IMR-90 (cell line): ENCODE measurements at regions of chr5 and their contacts with region 1.

Region 1: GRCh38 chr5:170633235-170634081 is 129.6 kb downstream of the KCNIP1 start:
- DNase-seq: peak; percentile 65
- ATAC-seq: peak; percentile 75
- H3K4me3 ChIP-seq: peak overlapping the region; percentile 16; the same call in 1 of the 2 replicates
- H3K27ac ChIP-seq: no peak overlapping the region
- H3K4me1 ChIP-seq: peaks cover 4% of the 10 kb centered on the region; the same call in 1 of the 2 replicates
- H3K27me3 ChIP-seq: peaks cover 2% of the 10 kb centered on the region; the same call in 1 of the 2 replicates
- CTCF ChIP-seq: no peak
- POLR2A ChIP-seq: no peak
- RAD21 ChIP-seq: no peak

Region 2: GRCh38 chr5:170100066-170100943 is 533.2 kb before region 1 on chr5:
- CTCF ChIA-PET with region 1: no interaction called
- POLR2A ChIA-PET with region 1: no interaction called
- dilution Hi-C with region 1: no loop called
- in situ Hi-C with region 1: no loop called
- intact Hi-C with region 1: loop called (anchors 5 kb)
- DNase-seq: peak; percentile 69
- ATAC-seq: peak; percentile 93
- H3K4me3 ChIP-seq: no peak overlapping the region
- H3K27ac ChIP-seq: no peak overlapping the region
- H3K4me1 ChIP-seq: no peaks in the 10 kb centered on the region
- H3K27me3 ChIP-seq: no peaks in the 10 kb centered on the region
- CTCF ChIP-seq: peak; percentile 71
- POLR2A ChIP-seq: no peak
- RAD21 ChIP-seq: peak; percentile 70

Region 3: DNA sequence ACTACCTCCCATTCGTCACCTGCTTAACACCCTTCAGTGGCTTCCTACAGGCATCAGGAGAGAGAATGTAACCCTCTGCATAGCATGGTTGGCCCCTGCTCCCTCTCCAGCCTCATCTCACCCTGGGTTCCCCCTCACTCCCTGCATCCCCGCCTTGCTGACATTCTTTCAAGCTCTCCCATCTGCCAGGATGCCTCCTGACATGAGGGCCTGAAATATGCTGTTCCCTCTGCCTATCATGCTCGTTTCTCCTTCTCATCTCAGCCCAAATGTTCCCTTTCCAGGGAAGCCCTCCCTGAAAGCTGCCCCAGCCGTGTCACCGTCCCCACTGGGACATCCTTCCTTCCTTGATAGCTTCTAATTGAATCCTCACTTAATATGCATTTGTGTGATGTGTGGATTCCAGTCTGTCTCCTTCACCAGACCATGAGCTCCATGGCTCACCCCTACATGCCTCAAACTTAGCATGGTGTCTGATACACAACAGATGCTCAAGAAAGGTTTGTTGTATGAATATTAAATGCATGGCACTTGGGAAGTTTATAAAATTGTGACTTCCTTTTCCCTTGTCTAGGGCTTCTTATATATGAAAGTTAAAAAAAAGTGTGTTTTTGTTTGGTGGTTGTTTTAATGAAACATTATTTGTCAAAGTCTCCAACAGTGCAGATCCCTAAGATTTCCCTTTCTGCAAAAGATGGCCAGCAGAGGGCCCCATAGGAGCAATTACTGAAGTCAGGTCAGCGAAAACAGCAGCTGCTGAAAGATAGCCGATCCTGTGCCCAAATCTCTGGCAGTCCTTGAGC is 407.9 kb before region 1 on chr5:
- CTCF ChIA-PET with region 1: no interaction called
- POLR2A ChIA-PET with region 1: no interaction called
- dilution Hi-C with region 1: no loop called
- in situ Hi-C with region 1: no loop called
- intact Hi-C with region 1: loop called (anchors 2 kb)
- DNase-seq: peak; percentile 39
- ATAC-seq: peak; percentile 90
- H3K4me3 ChIP-seq: no peak overlapping the region
- H3K27ac ChIP-seq: no peak overlapping the region
- H3K4me1 ChIP-seq: no peaks in the 10 kb centered on the region
- H3K27me3 ChIP-seq: no peaks in the 10 kb centered on the region
- CTCF ChIP-seq: peak; percentile 70
- POLR2A ChIP-seq: no peak
- RAD21 ChIP-seq: peak; percentile 60

Region 4: DNA sequence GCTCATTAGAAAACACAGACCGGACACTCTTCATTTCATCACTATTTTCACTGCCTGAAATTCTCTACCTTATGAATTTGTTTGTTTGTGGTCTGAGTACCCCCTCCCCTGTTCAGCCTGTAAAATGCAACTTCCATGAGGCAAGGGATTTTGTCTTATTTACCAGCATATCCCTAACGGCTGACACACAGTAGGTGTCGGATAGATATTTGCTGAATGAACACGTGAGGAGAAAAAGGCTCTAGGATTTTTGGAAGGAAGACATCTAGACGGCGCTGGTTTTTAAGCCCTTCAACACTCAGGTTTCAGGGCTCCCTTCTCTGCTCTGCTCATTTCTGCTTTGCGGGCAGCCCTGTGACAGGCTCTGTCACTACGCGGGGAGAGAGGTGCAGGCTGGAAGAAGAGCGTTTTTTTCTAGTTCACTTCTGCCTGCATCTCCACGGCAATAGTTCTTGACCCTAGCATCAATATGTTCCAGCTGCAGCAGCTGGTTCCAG is 285.3 kb before region 1 on chr5:
- CTCF ChIA-PET with region 1: no interaction called
- POLR2A ChIA-PET with region 1: no interaction called
- dilution Hi-C with region 1: no loop called
- in situ Hi-C with region 1: no loop called
- intact Hi-C with region 1: no loop called
- DNase-seq: no peak
- ATAC-seq: no peak
- H3K4me3 ChIP-seq: no peak overlapping the region
- H3K27ac ChIP-seq: no peak overlapping the region
- H3K4me1 ChIP-seq: no peaks in the 10 kb centered on the region
- H3K27me3 ChIP-seq: peaks cover 4% of the 10 kb centered on the region
- CTCF ChIP-seq: no peak
- POLR2A ChIP-seq: no peak
- RAD21 ChIP-seq: no peak

Region 5: DNA sequence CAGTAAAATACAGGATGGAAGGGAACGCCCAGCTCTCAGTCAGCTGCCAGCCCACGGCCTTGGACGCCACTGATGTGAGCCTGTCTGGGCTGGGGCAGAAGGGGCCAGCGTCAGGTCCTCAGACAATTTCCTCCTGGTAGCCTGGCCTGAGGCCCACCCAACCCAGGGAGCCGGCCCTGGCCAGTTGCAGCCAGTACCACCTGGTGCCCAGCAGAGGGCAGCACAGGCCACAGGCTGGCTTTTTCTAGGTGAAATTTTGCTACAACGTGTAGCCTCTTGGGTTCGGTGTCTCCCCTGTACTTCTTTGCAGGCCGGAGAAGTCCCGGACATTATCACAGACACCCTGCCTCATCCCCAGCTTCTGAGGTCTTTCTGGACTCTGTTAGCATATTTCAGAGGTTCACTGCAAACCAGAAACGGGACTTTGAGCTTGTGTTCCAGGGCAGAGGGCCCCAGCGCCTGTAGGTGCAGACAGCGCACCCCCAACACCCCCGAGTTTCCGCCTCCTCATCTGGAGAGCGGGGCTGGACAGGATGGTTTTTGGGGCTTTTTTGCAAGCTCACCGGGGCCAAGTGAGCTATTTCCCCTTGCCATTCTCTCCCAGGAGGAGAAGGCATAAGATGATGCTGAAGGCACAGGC is 198.4 kb before region 1 on chr5:
- CTCF ChIA-PET with region 1: interaction called, 13 read pairs
- POLR2A ChIA-PET with region 1: no interaction called
- dilution Hi-C with region 1: no loop called
- in situ Hi-C with region 1: no loop called
- intact Hi-C with region 1: loop called (anchors 1 kb)
- DNase-seq: peak; percentile 37
- ATAC-seq: peak; percentile 99
- H3K4me3 ChIP-seq: no peak overlapping the region
- H3K27ac ChIP-seq: no peak overlapping the region
- H3K4me1 ChIP-seq: no peaks in the 10 kb centered on the region
- H3K27me3 ChIP-seq: no peaks in the 10 kb centered on the region; the same call in 1 of the 2 replicates
- CTCF ChIP-seq: peak; percentile 96
- POLR2A ChIP-seq: no peak
- RAD21 ChIP-seq: peak; percentile 97

Region 6: GRCh38 chr5:170603578-170604565 is 29.6 kb before region 1 on chr5:
- CTCF ChIA-PET with region 1: no interaction called
- POLR2A ChIA-PET with region 1: no interaction called
- dilution Hi-C with region 1: no loop called
- in situ Hi-C with region 1: no loop called
- intact Hi-C with region 1: loop called (anchors 1 kb)
- DNase-seq: peak; percentile 6
- ATAC-seq: peak; percentile 67
- H3K4me3 ChIP-seq: no peak overlapping the region
- H3K27ac ChIP-seq: no peak overlapping the region
- H3K4me1 ChIP-seq: no peaks in the 10 kb centered on the region
- H3K27me3 ChIP-seq: peaks cover 4% of the 10 kb centered on the region
- CTCF ChIP-seq: peak; percentile 50
- POLR2A ChIP-seq: no peak
- RAD21 ChIP-seq: peak; percentile 40